Activated naive CD8-positive, alpha-beta T cell treated with anti-CD3 and anti-CD28 coated beads, Interleukin-2, amount 10 ng/mL, durations not matched to agents 7 days and 5 days (primary cell): ENCODE measurements at regions of chrX and their contacts with region 1.

Region 1: GRCh38 chrX:40097497-40098263 is at the start of gene BCOR:
- DNase-seq: peak; percentile 79
- ATAC-seq: peak; percentile 44
- H3K4me3 Mint-ChIP-seq: peak within 1 kb of the TSS; percentile 94
- H3K27ac Mint-ChIP-seq: peak within 1 kb of the TSS; percentile 89
- H3K4me1 Mint-ChIP-seq: peaks cover 22% of the 10 kb centered on the region
- H3K27me3 Mint-ChIP-seq: no peaks in the 10 kb centered on the region
- total RNA-seq, gene BCOR: 44.7 to 46.4 TPM

Region 2: GRCh38 chrX:39815631-39816030 is 282.0 kb before region 1 on chrX:
- POLR2A ChIA-PET with region 1: interaction called, 11 read pairs
- DNase-seq: no peak
- ATAC-seq: no peak
- H3K4me3 Mint-ChIP-seq: no peak overlapping the region
- H3K27ac Mint-ChIP-seq: no peak overlapping the region
- H3K4me1 Mint-ChIP-seq: peaks cover 14% of the 10 kb centered on the region
- H3K27me3 Mint-ChIP-seq: peaks cover 1% of the 10 kb centered on the region

Region 3: DNA sequence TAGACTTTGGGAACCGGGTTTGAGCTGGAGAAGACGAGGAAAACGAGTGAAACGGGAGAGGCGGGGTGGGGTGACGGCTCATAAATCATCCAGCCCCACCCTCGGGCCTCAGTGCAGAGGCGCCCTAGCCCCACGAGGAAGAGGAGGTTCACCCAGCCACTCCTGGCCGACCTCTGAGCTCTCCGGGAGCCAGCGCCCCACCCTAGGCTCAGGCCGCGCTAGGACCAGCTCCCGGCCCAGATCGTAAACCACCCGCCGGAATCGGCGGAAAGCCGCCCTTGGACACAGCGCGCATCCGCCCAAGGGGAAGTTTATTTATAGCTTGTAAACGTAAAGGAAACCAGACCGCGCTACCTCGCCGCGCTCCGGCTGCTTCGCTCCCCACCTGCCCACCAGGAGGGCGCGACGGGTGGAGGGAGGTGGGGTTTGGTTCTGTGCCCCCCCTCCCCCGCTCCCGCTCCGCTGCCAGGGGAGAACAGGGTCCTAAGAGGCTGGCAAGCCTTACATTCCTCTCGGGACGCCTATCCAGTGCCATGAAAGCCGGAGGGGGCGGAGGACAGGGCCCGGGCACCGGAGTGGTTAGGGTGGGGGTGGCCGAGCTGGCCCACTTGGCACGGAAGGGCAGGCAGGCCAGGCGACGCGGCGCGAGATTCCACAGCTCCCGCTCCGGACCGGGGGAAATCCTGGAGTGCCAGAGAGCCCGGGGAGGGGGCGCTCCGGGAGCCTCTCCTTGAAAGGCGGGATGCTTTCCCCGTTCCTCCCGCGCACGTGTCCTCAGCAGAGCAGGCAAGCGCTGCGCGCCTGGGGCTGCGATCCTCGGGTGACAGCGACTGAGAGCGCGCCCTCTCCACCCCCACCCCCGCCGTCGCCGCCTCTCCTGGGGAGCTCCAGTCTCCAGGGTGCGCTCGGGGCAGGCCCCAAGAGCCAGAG is 84.1 kb before region 1 on chrX:
- POLR2A ChIA-PET with region 1: interaction called, 27 read pairs
- DNase-seq: peak; percentile 62
- ATAC-seq: peak; percentile 46
- H3K4me3 Mint-ChIP-seq: peak overlapping the region; percentile 75
- H3K27ac Mint-ChIP-seq: peak overlapping the region; percentile 80
- H3K4me1 Mint-ChIP-seq: peaks cover 22% of the 10 kb centered on the region
- H3K27me3 Mint-ChIP-seq: peaks cover 11% of the 10 kb centered on the region

Region 4: GRCh38 chrX:40054792-40055191 is 42.9 kb before region 1 on chrX:
- POLR2A ChIA-PET with region 1: no interaction called
- DNase-seq: no peak
- ATAC-seq: no peak
- H3K4me3 Mint-ChIP-seq: no peak overlapping the region
- H3K27ac Mint-ChIP-seq: no peak overlapping the region
- H3K4me1 Mint-ChIP-seq: peaks cover 3% of the 10 kb centered on the region
- H3K27me3 Mint-ChIP-seq: no peaks in the 10 kb centered on the region

Region 5: DNA sequence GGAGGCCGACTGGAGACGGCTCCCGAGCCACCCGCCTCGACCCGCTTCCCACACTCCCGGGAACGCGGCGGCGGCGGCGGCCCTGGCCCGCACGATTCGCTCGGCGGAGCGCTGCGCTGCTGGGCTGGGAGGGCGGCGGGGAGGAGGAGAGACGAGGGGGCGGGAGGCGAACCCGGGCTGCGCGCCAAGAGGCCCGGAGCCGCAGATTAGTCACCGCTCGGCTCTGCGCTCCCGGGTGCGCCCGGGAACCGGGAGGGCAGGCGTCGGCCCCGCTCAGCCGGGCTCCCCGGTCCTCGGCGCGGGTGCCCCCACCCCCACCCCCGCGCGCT is 11.2 kb after region 1 on chrX:
- POLR2A ChIA-PET with region 1: interaction called, 24 read pairs
- DNase-seq: peak; percentile 71
- ATAC-seq: peak; percentile 41
- H3K4me3 Mint-ChIP-seq: peak overlapping the region; percentile 66
- H3K27ac Mint-ChIP-seq: no peak overlapping the region
- H3K4me1 Mint-ChIP-seq: peaks cover 6% of the 10 kb centered on the region
- H3K27me3 Mint-ChIP-seq: no peaks in the 10 kb centered on the region

Region 6: DNA sequence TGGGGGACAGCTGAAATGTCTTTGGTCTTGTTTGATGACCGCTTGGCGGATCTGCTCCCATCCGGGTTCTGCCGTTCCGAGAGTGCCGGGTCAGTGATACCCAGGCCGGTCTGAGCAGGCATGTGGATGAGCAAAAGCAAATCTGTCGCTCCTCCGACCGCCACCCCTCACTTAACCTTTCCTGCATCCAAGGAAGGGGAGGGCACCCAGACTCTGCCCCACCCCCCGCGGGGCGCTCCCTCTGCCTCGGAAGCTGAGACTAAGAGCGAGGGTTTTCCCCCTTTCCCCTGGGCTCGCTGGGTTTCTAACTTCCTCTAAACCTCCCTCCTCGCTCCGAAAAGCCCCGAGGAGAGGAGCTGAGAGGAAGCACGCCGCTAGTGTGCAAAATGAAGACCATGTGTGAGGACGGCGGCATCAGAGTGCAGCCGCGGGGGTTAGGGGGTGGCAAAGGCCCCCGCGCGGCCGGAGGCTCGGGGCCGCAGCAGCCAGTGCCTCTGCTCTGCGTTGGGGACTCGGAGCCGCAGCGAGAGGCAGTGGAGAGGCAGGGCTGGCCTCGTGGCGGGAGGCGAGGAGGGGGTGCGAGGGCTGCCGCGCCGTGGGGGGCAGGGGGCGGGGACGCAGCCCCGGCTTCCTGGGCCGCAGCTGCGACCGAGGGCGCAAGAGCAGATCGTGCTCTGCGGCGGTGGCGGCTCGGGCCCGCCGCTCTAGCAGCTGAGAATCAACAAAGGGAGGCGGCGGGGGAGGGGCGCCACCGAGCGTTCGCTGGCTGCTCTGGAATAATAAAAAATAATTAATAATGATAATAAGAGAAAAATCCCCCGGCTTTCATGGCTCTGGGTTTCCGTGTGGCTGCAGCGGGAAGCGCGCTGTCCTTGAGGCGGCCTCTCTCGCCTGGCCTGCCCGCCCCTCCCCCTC is 55.9 kb after region 1 on chrX:
- POLR2A ChIA-PET with region 1: interaction called, 35 read pairs
- DNase-seq: peak; percentile 68
- ATAC-seq: peak; percentile 53
- H3K4me3 Mint-ChIP-seq: peak overlapping the region; percentile 85
- H3K27ac Mint-ChIP-seq: peak overlapping the region; percentile 67
- H3K4me1 Mint-ChIP-seq: peaks cover 6% of the 10 kb centered on the region
- H3K27me3 Mint-ChIP-seq: no peaks in the 10 kb centered on the region

Region 7: DNA sequence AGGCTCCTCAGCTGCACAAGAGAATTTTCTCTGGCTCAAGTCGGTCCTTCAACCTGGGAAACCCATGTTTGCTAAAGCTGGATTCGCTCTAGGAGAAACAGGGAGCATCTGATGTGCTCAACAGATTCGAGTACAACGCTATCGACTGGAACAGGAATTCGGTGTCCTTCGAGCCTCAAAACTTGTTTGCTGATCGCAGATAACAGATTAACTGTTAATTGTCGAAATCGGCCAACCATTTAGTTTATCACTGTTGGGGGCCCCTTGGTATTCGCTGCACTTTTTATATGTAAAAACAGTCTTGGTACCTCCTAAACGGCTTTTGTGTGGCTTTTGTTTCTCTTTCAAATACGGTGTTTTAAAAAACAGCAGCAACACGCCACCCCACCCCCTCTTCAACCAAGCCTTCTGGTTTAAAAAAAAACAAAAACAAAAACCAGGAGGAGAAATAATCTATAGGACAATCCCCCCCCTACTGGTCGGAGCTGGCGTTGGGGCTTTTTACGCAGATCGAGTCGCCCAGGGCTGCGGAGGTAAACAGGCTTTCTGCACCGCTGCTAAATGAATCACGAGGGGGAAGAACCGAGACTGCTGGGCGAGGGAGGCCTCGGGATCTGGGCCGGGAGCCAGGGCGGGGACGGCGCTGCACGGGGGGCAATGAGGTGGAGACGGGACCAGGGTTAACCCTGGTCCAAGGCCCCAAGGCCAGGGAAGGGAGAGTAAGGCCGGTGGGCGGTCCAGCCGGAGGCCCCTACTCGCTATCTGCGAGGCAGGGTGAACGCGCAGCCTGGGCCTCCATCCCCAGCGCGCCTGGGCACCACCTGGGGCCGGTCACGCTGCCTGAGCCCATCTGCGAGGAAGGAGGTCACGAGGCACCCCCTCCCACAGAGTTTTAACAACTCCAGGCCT is 71.8 kb after region 1 on chrX:
- POLR2A ChIA-PET with region 1: interaction called, 71 read pairs
- DNase-seq: peak; percentile 75
- ATAC-seq: peak; percentile 65
- H3K4me3 Mint-ChIP-seq: peak overlapping the region; percentile 88
- H3K27ac Mint-ChIP-seq: peak overlapping the region; percentile 98
- H3K4me1 Mint-ChIP-seq: peaks cover 36% of the 10 kb centered on the region
- H3K27me3 Mint-ChIP-seq: no peaks in the 10 kb centered on the region

Region 8: GRCh38 chrX:40175511-40176350 is 78.1 kb after region 1 on chrX:
- POLR2A ChIA-PET with region 1: interaction called, 71 read pairs
- DNase-seq: peak; percentile 79
- ATAC-seq: peak; percentile 41
- H3K4me3 Mint-ChIP-seq: peak overlapping the region; percentile 88
- H3K27ac Mint-ChIP-seq: peak overlapping the region; percentile 91
- H3K4me1 Mint-ChIP-seq: peaks cover 26% of the 10 kb centered on the region
- H3K27me3 Mint-ChIP-seq: no peaks in the 10 kb centered on the region